Caco-2 (cell line): ENCODE measurements at regions of chr2 and their contacts with region 1.

Region 1: GRCh38 chr2:224650815-224651439 is 65.2 kb downstream of the CCDC195 start:
- DNase-seq: peak in 1 of 2 experiments; percentile 40
- H3K4me3 ChIP-seq: no peak overlapping the region
- H3K4me3 Mint-ChIP-seq: no peak overlapping the region
- H3K27ac Mint-ChIP-seq: no peak overlapping the region
- H3K4me1 ChIP-seq: no peaks in the 10 kb centered on the region
- H3K4me1 Mint-ChIP-seq: no peaks in the 10 kb centered on the region
- H3K27me3 ChIP-seq: no peaks in the 10 kb centered on the region
- H3K27me3 Mint-ChIP-seq: no peaks in the 10 kb centered on the region
- CTCF ChIP-seq: peak; percentile 36 to 57

Region 2: GRCh38 chr2:224449212-224450147 is 201.4 kb before region 1 on chr2:
- CTCF ChIA-PET with region 1: no interaction called
- POLR2A ChIA-PET with region 1: no interaction called
- intact Hi-C with region 1: loop called (anchors 1 kb)
- DNase-seq: peak in 1 of 2 experiments; percentile 35
- H3K4me3 ChIP-seq: no peak overlapping the region
- H3K4me3 Mint-ChIP-seq: no peak overlapping the region
- H3K27ac Mint-ChIP-seq: no peak overlapping the region
- H3K4me1 ChIP-seq: no peaks in the 10 kb centered on the region
- H3K4me1 Mint-ChIP-seq: no peaks in the 10 kb centered on the region
- H3K27me3 ChIP-seq: no peaks in the 10 kb centered on the region
- H3K27me3 Mint-ChIP-seq: no peaks in the 10 kb centered on the region
- CTCF ChIP-seq: peak; percentile 82 to 85

Region 3: DNA sequence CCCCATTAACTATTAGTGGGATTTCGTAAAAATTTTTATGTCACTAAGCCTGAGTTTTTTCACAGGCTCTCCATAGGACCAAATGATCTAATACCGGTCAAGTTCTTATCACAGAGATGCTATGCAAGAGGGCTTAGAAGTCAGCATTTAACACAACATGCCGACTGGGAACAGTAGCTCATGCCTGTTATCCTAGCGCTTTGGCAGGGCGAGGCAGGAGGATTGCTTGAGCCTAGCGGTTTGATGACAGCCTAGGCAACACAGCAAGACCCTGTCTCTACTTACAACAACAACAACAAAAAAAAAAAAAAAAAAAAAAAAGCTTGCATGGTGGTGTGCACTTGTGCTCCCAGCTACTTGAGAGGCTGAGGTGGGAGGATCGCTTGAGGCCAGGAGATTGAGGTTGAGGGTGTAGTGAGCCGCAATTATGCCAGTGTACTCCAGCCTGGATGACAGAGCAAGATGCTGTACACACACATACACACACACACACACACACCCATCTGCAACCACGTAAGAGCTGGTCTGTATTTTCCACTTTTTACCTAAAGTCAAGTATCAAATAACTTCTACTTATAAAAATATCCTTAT is 181.5 kb before region 1 on chr2:
- CTCF ChIA-PET with region 1: no interaction called
- POLR2A ChIA-PET with region 1: no interaction called
- intact Hi-C with region 1: loop called (anchors 5 kb)
- DNase-seq: no peak
- H3K4me3 ChIP-seq: no peak overlapping the region
- H3K4me3 Mint-ChIP-seq: no peak overlapping the region
- H3K27ac Mint-ChIP-seq: no peak overlapping the region
- H3K4me1 ChIP-seq: no peaks in the 10 kb centered on the region
- H3K4me1 Mint-ChIP-seq: no peaks in the 10 kb centered on the region
- H3K27me3 ChIP-seq: no peaks in the 10 kb centered on the region
- H3K27me3 Mint-ChIP-seq: peaks cover 2% of the 10 kb centered on the region
- CTCF ChIP-seq: no peak

Region 4: GRCh38 chr2:224611938-224612337 is 39.0 kb before region 1 on chr2:
- CTCF ChIA-PET with region 1: no interaction called
- POLR2A ChIA-PET with region 1: no interaction called
- intact Hi-C with region 1: loop called (anchors 2 kb)
- DNase-seq: no peak
- H3K4me3 ChIP-seq: no peak overlapping the region
- H3K4me3 Mint-ChIP-seq: no peak overlapping the region
- H3K27ac Mint-ChIP-seq: no peak overlapping the region
- H3K4me1 ChIP-seq: no peaks in the 10 kb centered on the region
- H3K4me1 Mint-ChIP-seq: no peaks in the 10 kb centered on the region
- H3K27me3 ChIP-seq: no peaks in the 10 kb centered on the region
- H3K27me3 Mint-ChIP-seq: no peaks in the 10 kb centered on the region
- CTCF ChIP-seq: no peak

Region 5: GRCh38 chr2:224778474-224778877 is 127.5 kb after region 1 on chr2:
- CTCF ChIA-PET with region 1: no interaction called
- POLR2A ChIA-PET with region 1: no interaction called
- intact Hi-C with region 1: loop called (anchors 5 kb)
- DNase-seq: peak; percentile 32 to 36
- H3K4me3 ChIP-seq: no peak overlapping the region
- H3K4me3 Mint-ChIP-seq: no peak overlapping the region
- H3K27ac Mint-ChIP-seq: no peak overlapping the region
- H3K4me1 ChIP-seq: no peaks in the 10 kb centered on the region
- H3K4me1 Mint-ChIP-seq: peaks cover 7% of the 10 kb centered on the region
- H3K27me3 ChIP-seq: no peaks in the 10 kb centered on the region
- H3K27me3 Mint-ChIP-seq: no peaks in the 10 kb centered on the region
- CTCF ChIP-seq: peak; percentile 53 to 74

Region 6: DNA sequence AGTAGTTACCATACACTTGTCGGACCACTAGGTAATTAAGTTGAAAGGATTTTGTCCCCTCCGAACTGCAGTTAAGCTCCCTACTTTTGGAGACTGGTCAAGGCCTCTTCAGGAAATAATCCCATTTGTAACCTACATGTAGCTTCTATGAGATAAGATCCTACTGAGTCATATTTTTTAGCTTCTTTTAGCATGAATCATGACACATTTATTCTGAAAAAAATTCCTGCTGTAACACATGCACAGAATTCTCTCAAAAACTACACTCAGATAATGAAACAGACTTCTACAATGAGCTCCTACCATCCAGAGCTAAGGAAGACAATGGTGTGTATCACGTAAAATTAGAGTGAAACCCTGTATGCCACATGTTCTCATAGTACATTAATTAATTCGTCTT is 165.9 kb after region 1 on chr2:
- CTCF ChIA-PET with region 1: no interaction called
- POLR2A ChIA-PET with region 1: no interaction called
- intact Hi-C with region 1: no loop called
- DNase-seq: no peak
- H3K4me3 ChIP-seq: no peak overlapping the region
- H3K4me3 Mint-ChIP-seq: no peak overlapping the region
- H3K27ac Mint-ChIP-seq: no peak overlapping the region
- H3K4me1 ChIP-seq: no peaks in the 10 kb centered on the region
- H3K4me1 Mint-ChIP-seq: no peaks in the 10 kb centered on the region
- H3K27me3 ChIP-seq: no peaks in the 10 kb centered on the region
- H3K27me3 Mint-ChIP-seq: no peaks in the 10 kb centered on the region
- CTCF ChIP-seq: no peak